Cardiac septum (tissue), 1 donor: ENCODE measurements at regions of chr9 and their contacts with region 1.

Region 1: DNA sequence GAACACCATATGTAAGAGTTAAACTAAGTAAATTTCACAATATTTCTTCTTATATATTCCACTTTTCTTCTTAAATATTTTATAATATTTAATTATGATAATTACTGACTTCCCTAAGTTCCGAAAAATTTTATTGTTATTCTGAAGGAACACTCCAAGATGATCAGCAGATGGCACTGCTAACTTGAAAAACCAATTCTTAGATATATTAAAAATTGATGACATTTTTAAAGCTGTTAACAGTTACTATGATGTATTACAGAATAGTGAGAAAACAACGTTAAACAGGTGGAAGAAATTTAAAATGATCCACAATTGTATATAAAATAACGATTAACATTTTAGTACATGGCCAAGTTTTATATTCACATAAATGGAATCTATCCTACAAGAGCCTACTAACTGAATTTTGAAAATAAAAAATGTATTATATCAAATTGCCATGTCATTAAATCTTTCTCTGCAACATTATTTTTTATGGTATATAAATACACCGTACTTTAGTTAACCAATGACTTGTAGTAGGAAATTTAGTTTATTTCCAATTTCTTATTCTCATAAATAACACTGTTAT is 30.1 kb upstream of the MUSK start:
- DNase-seq: no peak

Region 2: GRCh38 chr9:111037381-111038305 is 399.2 kb after region 1 on chr9:
- intact Hi-C with region 1: loop called (anchors 10 kb)
- DNase-seq: no peak

Region 3: GRCh38 chr9:111298731-111299598 is 660.5 kb after region 1 on chr9:
- intact Hi-C with region 1: loop called (anchors 5 kb)
- DNase-seq: no peak